WTC11 (cell line): ENCODE measurements at regions of chr6 and their contacts with region 1.

Region 1: DNA sequence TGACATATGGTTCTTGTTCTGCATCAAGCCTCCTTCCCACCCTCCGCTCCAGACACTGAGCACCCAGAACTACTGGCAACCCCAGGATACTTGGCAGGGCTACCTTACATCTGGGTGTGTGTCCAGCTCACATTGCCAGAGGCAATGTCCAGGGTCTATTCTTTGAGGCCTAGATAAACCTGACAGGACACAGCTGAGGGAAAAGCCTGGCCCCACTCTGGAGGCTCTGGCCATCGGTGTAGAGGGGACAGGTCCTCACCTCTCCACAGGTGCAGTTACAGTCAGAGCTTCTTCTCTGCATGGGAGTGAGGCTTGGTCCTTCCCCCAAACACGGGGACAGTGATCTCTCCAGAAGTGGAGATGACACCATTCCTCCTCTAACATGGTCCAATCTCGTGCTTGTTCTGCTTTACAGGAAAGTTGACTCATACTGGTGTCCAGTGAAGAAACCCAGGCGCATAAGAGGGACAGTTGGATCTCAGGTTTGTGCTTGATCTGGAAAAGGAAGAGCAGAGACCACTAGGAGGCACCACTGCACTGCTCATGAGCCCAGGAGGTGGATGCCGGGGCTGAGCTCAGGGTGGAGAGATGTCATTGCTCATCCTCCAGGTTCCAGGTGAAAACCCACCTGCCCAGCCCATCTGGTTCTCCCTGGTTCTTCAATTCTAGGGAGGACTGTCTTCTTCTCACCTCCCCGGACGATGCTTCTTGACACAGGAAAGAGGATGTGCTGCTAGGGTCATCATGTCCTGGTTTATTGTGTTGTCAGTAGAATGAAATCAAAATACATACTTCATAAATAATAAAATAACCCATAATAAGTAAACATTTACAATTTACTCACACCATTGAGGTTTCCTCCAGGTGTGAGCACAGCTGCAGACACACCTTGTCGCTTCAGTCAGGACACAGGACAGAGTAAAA is 14.7 kb downstream of the HLA-F start:
- DNase-seq: peak; percentile 81
- ATAC-seq: peak; percentile 97
- H3K4me3 Mint-ChIP-seq: no peak overlapping the region
- H3K27ac Mint-ChIP-seq: no peak overlapping the region
- H3K4me1 Mint-ChIP-seq: no peaks in the 10 kb centered on the region
- H3K27me3 Mint-ChIP-seq: peaks cover 18% of the 10 kb centered on the region
- CTCF ChIP-seq: peak; percentile 67

Region 2: GRCh38 chr6:29763491-29764289 is 25.7 kb after region 1 on chr6:
- CTCF ChIA-PET with region 1: interaction called, 18 read pairs
- POLR2A ChIA-PET with region 1: no interaction called
- DNase-seq: no peak
- ATAC-seq: no peak
- H3K4me3 Mint-ChIP-seq: no peak overlapping the region
- H3K27ac Mint-ChIP-seq: no peak overlapping the region
- H3K4me1 Mint-ChIP-seq: peaks cover 27% of the 10 kb centered on the region
- H3K27me3 Mint-ChIP-seq: peaks cover 22% of the 10 kb centered on the region
- CTCF ChIP-seq: no peak

Region 3: DNA sequence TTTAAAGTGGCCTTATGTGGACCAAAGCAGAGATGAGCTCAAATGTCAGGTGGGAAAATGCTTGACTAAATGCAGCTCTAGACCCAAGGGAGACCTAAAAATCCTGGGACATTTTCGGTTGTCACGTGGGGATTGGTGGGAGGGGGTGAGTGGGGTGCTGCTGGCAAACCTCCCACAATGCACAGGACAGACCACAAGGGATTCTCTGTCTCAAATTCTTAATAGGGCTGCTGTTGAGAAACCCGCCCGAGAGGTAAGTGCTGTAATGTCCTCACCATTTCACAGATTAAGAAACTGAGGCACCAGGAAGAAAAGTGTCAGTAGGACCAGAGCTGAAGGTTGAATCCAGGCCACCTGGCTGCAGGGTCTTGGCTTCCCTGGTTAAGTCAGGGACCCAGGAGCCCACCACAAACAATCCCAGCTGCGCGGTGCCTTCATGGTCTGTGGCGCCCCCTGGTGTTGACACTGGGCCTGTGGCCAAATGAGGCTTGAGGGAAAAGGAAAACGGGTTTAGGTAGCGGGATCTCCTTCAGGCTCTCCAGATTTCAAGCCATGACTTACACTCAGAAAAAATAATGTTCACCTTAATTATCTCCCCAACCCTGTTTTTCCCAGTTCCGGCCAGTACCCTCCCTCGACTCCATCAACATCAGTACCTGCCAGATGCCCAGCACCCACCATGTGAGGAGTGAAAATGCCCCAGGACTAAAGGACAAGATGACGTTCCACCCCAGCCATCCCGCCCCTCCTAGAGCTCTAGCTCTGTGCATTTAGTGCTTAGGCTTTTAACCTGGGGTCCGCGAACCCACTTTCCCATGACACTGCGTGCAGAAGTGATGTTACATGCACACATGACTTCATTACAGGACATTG is 96.8 kb after region 1 on chr6:
- CTCF ChIA-PET with region 1: interaction called, 69 read pairs
- POLR2A ChIA-PET with region 1: no interaction called
- DNase-seq: peak; percentile 82
- ATAC-seq: peak; percentile 90
- H3K4me3 Mint-ChIP-seq: no peak overlapping the region
- H3K27ac Mint-ChIP-seq: no peak overlapping the region
- H3K4me1 Mint-ChIP-seq: no peaks in the 10 kb centered on the region; the same call in 1 of the 2 replicates
- H3K27me3 Mint-ChIP-seq: peaks cover 57% of the 10 kb centered on the region
- CTCF ChIP-seq: peak; percentile 98